ENCODE measurements at regions of chr6 and their contacts with region 1.

Region 1: GRCh38 chr6:105733565-105734162 is 330.8 kb upstream of the PREP start:
- DNase-seq: no peak
- H3K4me3 Mint-ChIP-seq: no peak overlapping the region
- H3K27ac Mint-ChIP-seq: no peak overlapping the region
- H3K4me1 Mint-ChIP-seq: no peaks in the 10 kb centered on the region
- H3K27me3 Mint-ChIP-seq: no peaks in the 10 kb centered on the region

Region 2: GRCh38 chr6:105431226-105431625 is 302.4 kb before region 1 on chr6:
- CTCF ChIA-PET with region 1: interaction called, 5 read pairs
- POLR2A ChIA-PET with region 1: no interaction called
- intact Hi-C with region 1: loop called (anchors 5 kb)
- DNase-seq: no peak
- H3K4me3 Mint-ChIP-seq: no peak overlapping the region
- H3K27ac Mint-ChIP-seq: no peak overlapping the region
- H3K4me1 Mint-ChIP-seq: no peaks in the 10 kb centered on the region
- H3K27me3 Mint-ChIP-seq: peaks cover 8% of the 10 kb centered on the region

Region 3: GRCh38 chr6:105522626-105523322 is 210.9 kb before region 1 on chr6:
- CTCF ChIA-PET with region 1: no interaction called
- POLR2A ChIA-PET with region 1: no interaction called
- intact Hi-C with region 1: no loop called
- DNase-seq: peak; percentile 14
- H3K4me3 Mint-ChIP-seq: no peak overlapping the region
- H3K27ac Mint-ChIP-seq: peak overlapping the region; percentile 30
- H3K4me1 Mint-ChIP-seq: peaks cover 22% of the 10 kb centered on the region
- H3K27me3 Mint-ChIP-seq: peaks cover 2% of the 10 kb centered on the region

Region 4: GRCh38 chr6:105804436-105804835 is 70.8 kb after region 1 on chr6:
- CTCF ChIA-PET with region 1: no interaction called
- POLR2A ChIA-PET with region 1: no interaction called
- intact Hi-C with region 1: no loop called
- DNase-seq: no peak
- H3K4me3 Mint-ChIP-seq: no peak overlapping the region
- H3K27ac Mint-ChIP-seq: no peak overlapping the region
- H3K4me1 Mint-ChIP-seq: peaks cover 15% of the 10 kb centered on the region
- H3K27me3 Mint-ChIP-seq: peaks cover 8% of the 10 kb centered on the region

Region 5: DNA sequence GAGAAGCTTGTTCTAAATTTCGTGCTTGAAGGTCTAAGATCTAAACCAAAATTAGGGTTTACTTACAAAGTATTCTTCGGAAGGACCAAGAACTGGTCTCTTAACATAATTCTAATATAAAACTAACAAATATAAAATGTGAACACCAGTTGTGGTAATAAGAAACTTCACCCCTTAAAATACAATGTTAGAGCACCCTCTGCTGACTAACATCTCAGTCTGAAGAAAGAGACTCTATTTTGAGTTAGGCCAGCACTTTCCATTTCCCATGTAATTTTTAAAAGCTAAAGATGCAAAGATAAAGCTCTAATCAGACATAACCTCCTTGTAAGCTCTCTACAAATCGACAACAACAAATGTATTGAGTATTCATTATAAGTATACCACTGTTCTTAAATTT is 567.3 kb after region 1 on chr6:
- CTCF ChIA-PET with region 1: no interaction called
- POLR2A ChIA-PET with region 1: no interaction called
- intact Hi-C with region 1: loop called (anchors 1 kb)
- DNase-seq: no peak
- H3K4me3 Mint-ChIP-seq: no peak overlapping the region
- H3K27ac Mint-ChIP-seq: no peak overlapping the region
- H3K4me1 Mint-ChIP-seq: peaks cover 15% of the 10 kb centered on the region
- H3K27me3 Mint-ChIP-seq: no peaks in the 10 kb centered on the region